Activated CD8-positive, alpha-beta T cell treated with anti-CD3 and anti-CD28 coated beads, Interleukin-2, amount 10 ng/mL, durations not matched to agents 7 days and 5 days (primary cell): ENCODE measurements at regions of chr6 and their contacts with region 1.

Region 1: DNA sequence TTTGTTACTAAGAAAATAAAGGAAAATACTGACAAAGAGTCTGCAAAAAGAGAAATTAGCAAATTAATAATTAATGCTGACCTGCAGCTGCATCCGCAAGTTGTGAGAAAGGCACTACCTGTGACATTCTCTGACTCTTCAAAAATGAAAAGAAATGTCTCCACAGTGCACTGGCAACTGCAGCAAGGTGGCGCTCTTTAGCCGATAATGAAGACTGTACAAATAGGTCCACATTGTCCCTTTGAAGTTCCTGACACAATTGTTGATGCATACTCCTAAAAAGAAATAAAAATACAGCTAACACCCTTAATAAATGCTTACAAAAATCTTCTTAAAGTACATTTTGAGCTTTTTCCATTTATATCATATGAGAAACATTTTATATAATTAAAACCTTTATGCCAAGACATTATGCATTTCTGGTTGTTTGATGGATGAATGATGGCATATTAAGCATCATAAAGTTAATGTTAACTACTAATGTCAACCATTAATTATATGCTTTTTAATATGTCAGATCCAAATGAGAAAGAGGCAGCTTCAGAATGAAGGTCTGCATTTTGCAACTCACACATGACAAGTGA is 96.5 kb downstream of the MMS22L start:
- DNase-seq: peak; percentile 76
- ATAC-seq: peak; percentile 86
- H3K4me3 Mint-ChIP-seq: no peak overlapping the region
- H3K27ac Mint-ChIP-seq: no peak overlapping the region
- H3K4me1 Mint-ChIP-seq: no peaks in the 10 kb centered on the region
- H3K27me3 Mint-ChIP-seq: no peaks in the 10 kb centered on the region

Region 2: DNA sequence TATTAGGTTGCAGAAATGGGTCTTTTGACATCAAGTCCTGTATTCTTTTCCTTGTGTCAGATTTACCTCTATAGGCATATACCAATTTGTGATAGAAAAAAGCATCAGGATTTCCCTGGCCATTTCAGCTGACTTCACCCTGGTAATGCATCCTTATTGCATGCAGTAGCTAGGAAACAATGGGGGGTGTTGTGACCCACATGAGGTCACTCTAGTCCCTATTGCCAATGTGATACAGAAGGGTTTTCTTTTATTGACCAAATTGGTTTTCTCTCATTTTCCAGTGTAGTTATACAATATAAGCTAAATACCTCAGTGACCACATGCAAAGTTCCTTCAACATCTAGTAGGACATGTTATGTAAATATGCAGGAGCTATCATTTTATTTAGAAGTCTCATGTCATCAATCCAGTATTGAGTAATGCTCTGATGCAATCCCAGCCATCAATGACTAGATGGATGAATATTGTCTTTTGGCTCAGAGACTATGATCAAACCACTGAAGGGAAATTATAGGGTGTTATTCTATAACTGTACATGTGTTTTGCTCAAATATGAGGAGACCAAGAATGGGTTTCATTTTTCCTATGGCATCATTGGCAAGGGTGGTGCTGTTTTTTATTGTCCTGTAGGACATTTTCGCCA is 84.2 kb before region 1 on chr6:
- CTCF ChIA-PET with region 1: no interaction called
- POLR2A ChIA-PET with region 1: no interaction called
- DNase-seq: no peak
- ATAC-seq: no peak
- H3K4me3 Mint-ChIP-seq: no peak overlapping the region
- H3K27ac Mint-ChIP-seq: no peak overlapping the region
- H3K4me1 Mint-ChIP-seq: no peaks in the 10 kb centered on the region
- H3K27me3 Mint-ChIP-seq: no peaks in the 10 kb centered on the region

Region 3: GRCh38 chr6:97175806-97176205 is 10.7 kb before region 1 on chr6:
- CTCF ChIA-PET with region 1: interaction called, 12 read pairs
- POLR2A ChIA-PET with region 1: no interaction called
- DNase-seq: no peak
- ATAC-seq: no peak
- H3K4me3 Mint-ChIP-seq: no peak overlapping the region
- H3K27ac Mint-ChIP-seq: no peak overlapping the region
- H3K4me1 Mint-ChIP-seq: no peaks in the 10 kb centered on the region
- H3K27me3 Mint-ChIP-seq: no peaks in the 10 kb centered on the region

Region 4: GRCh38 chr6:97198046-97198565 is 11.6 kb after region 1 on chr6:
- CTCF ChIA-PET with region 1: interaction called, 43 read pairs
- POLR2A ChIA-PET with region 1: no interaction called
- DNase-seq: no peak
- ATAC-seq: no peak
- H3K4me3 Mint-ChIP-seq: no peak overlapping the region
- H3K27ac Mint-ChIP-seq: no peak overlapping the region
- H3K4me1 Mint-ChIP-seq: no peaks in the 10 kb centered on the region
- H3K27me3 Mint-ChIP-seq: no peaks in the 10 kb centered on the region